ENCODE measurements at regions of chr17 and their contacts with region 1.

Region 1: DNA sequence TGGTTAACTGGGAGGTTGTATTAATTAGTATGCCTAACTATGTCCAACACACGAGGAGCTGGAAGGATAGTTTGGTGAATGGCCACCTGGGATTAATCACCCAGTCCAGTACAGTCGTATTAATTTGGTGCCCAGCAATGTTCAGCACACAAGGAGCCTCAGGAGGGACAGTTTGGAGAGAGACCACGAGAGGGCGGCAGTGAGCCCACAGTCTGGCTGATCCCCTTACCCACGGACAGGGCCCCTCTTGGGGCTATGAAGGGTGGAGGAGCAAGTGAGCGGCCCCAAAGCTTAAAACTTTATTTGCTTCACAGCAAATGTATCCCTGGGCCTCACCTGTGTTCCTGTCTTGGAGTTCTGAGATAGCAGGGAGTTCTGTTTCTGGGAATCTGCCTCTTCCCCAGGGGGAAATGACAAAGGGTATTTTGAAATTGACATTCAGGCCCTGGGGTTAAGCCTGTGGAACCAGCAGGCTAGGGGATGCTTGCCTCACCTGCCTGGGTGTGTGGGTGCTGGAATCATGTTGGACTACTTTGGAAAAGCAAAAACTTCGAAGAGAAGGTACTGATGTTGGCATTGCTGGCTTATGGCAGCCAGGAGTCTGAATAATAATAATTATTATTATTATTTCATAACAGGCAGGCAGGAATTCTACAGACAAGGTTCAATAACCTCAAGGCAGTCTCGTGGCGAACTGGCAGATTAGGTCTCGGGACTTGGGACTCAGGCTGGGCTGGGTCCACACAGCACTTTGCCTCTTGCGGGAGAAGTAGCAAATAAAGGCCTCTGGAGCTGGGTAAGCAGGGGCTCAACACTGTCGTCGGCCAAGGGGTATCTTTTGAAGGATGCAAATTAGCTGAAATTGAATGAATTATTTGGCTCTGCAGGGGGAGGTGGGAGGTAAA is 227.6 kb upstream of the ASIC2 start:
- DNase-seq: peak; percentile 33 to 95
- H3K4me3 ChIP-seq: no peak overlapping the region
- H3K27ac ChIP-seq: no peak overlapping the region
- H3K4me1 ChIP-seq: peaks cover 0 to 3% (median under 1%) of the 10 kb centered on the region in 4 experiments; a peak in 1 of 7 replicates
- H3K27me3 ChIP-seq: no peaks in the 10 kb centered on the region; a peak in 1 of 7 replicates
- CTCF ChIP-seq: peak; percentile 81 to 87 (median 82)
- EP300 ChIP-seq: no peak
- POLR2A ChIP-seq: no peak
- RAD21 ChIP-seq: peak; percentile 69 to 73

Region 2: DNA sequence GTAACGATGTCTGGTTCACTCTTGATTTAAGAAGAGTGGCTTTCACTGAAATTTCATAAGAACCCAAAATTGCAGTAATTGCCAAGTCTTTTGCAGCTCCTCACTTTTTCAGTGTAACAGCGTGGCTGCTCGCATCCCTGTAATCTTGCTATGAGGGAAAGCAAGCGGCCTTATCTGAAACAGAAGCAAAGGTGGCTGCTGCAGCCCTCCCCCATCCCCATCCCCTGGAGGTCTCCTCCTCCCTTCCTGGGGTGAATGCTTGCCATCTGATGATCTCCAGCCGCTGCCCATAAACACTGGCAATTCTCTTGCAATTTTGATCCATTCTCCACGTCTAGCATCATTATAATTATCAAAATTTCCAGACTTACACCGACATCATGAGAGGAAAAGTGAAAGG is 45.1 kb before region 1 on chr17:
- CTCF ChIA-PET with region 1: interaction called, 24 read pairs
- POLR2A ChIA-PET with region 1: no interaction called
- DNase-seq: no peak
- H3K4me3 ChIP-seq: no peak overlapping the region
- H3K27ac ChIP-seq: no peak overlapping the region
- H3K4me1 ChIP-seq: no peaks in the 10 kb centered on the region; a peak in 1 of 7 replicates
- H3K27me3 ChIP-seq: no peaks in the 10 kb centered on the region; a peak in 1 of 7 replicates
- CTCF ChIP-seq: no peak
- EP300 ChIP-seq: no peak
- POLR2A ChIP-seq: no peak
- RAD21 ChIP-seq: no peak

Region 3: GRCh38 chr17:33506889-33507650 is 13.6 kb before region 1 on chr17:
- CTCF ChIA-PET with region 1: interaction called, 74 read pairs
- POLR2A ChIA-PET with region 1: no interaction called
- DNase-seq: no peak
- H3K4me3 ChIP-seq: no peak overlapping the region
- H3K27ac ChIP-seq: no peak overlapping the region
- H3K4me1 ChIP-seq: no peaks in the 10 kb centered on the region
- H3K27me3 ChIP-seq: no peaks in the 10 kb centered on the region
- CTCF ChIP-seq: no peak
- EP300 ChIP-seq: no peak
- POLR2A ChIP-seq: no peak
- RAD21 ChIP-seq: no peak

Region 4: GRCh38 chr17:33647956-33648355 is 127.3 kb after region 1 on chr17:
- CTCF ChIA-PET with region 1: interaction called, 20 read pairs
- POLR2A ChIA-PET with region 1: no interaction called
- DNase-seq: no peak
- H3K4me3 ChIP-seq: no peak overlapping the region
- H3K27ac ChIP-seq: no peak overlapping the region
- H3K4me1 ChIP-seq: peaks cover 0 to 4% (median 1%) of the 10 kb centered on the region in 4 experiments; a peak in 2 of 7 replicates
- H3K27me3 ChIP-seq: no peaks in the 10 kb centered on the region
- CTCF ChIP-seq: peak; percentile 66 to 78 (median 67)
- EP300 ChIP-seq: no peak
- POLR2A ChIP-seq: no peak
- RAD21 ChIP-seq: peak; percentile 64 to 74

Region 5: GRCh38 chr17:33674685-33675084 is 154.0 kb after region 1 on chr17:
- CTCF ChIA-PET with region 1: interaction called, 14 read pairs
- POLR2A ChIA-PET with region 1: no interaction called
- DNase-seq: peak; percentile 17 to 85
- H3K4me3 ChIP-seq: no peak overlapping the region
- H3K27ac ChIP-seq: no peak overlapping the region
- H3K4me1 ChIP-seq: no peaks in the 10 kb centered on the region
- H3K27me3 ChIP-seq: no peaks in the 10 kb centered on the region
- CTCF ChIP-seq: peak; percentile 48 to 78 (median 70)
- EP300 ChIP-seq: no peak
- POLR2A ChIP-seq: no peak
- RAD21 ChIP-seq: peak; percentile 70 to 73

Measured in H1 (cell line).